ENCODE measurements at regions of chr11 and their contacts with region 1.

Region 1: GRCh38 chr11:126317756-126318573 is 14.1 kb downstream of the DCPS start:
- DNase-seq: peak; percentile 96
- H3K4me3 ChIP-seq: peak overlapping the region; percentile 27 to 44 (median 38)
- H3K27ac ChIP-seq: peak overlapping the region; percentile 82 to 85 (median 84)
- H3K4me1 ChIP-seq: peaks cover 25 to 28% (median 27%) of the 10 kb centered on the region in 4 donors
- H3K27me3 ChIP-seq: no peaks in the 10 kb centered on the region
- CTCF ChIP-seq: no peak
- EP300 ChIP-seq: no peak
- POLR2A ChIP-seq: no peak

Region 2: GRCh38 chr11:126303623-126304456 is 14.1 kb before region 1 on chr11 and contains the start of gene DCPS:
- intact Hi-C with region 1: loop called (anchors 1 kb)
- DNase-seq: peak; percentile 96
- H3K4me3 ChIP-seq: peak within 1 kb of the TSS; percentile 65 to 90 (median 68)
- H3K27ac ChIP-seq: peak within 1 kb of the TSS; percentile 85 to 92 (median 88)
- H3K4me1 ChIP-seq: peaks cover 17 to 24% (median 21%) of the 10 kb centered on the region in 4 donors
- H3K27me3 ChIP-seq: no peaks in the 10 kb centered on the region
- CTCF ChIP-seq: no peak
- EP300 ChIP-seq: no peak
- POLR2A ChIP-seq: peak; percentile 10
- total RNA-seq, gene DCPS: 8.0 to 18.4 (median 14.3) TPM

Region 3: DNA sequence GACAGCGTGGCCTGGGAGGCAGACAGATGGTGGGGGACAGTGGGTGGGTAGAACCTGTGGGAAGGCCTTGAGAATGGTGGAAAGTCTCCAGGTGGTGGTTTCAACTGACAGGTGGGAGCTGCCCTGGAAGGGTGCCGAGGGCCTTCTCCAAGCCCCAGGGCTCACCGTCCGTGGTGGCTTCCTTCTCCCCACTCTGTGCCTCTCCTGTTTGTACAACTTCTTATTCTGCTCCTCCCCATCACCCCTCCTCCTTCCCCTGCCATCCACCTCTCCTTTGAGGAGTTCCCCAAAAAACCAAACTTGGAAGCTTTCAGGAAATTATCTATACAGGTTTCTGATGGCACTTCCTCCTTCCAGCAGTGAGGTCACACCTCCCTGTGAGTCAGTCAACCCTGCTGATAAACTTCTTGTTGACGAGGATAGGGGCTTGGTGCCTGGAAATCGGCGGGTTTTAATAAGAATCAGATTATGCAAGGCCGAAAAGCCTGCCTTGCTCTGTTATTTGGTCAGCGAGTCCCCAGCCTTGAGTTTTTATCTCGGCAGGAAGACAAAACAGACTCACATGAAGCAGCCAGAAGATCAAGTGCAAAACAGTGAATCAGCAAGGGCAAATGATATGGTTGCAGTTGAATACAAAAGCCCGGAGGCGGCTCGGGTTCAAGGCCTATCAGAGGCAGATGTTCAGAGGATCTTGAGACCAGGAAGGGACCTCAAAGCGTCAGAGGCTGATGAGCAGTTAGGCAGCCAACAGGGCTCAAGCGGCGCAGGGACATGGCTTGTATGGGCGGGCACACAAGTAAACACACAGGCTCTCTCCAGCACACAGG is 28.0 kb after region 1 on chr11:
- intact Hi-C with region 1: no loop called
- DNase-seq: no peak
- H3K4me3 ChIP-seq: no peak overlapping the region
- H3K27ac ChIP-seq: peak overlapping the region; percentile 42 to 67 (median 60)
- H3K4me1 ChIP-seq: peaks cover 44 to 58% (median 51%) of the 10 kb centered on the region in 4 donors
- H3K27me3 ChIP-seq: no peaks in the 10 kb centered on the region
- CTCF ChIP-seq: no peak
- EP300 ChIP-seq: no peak
- POLR2A ChIP-seq: no peak

Region 4: DNA sequence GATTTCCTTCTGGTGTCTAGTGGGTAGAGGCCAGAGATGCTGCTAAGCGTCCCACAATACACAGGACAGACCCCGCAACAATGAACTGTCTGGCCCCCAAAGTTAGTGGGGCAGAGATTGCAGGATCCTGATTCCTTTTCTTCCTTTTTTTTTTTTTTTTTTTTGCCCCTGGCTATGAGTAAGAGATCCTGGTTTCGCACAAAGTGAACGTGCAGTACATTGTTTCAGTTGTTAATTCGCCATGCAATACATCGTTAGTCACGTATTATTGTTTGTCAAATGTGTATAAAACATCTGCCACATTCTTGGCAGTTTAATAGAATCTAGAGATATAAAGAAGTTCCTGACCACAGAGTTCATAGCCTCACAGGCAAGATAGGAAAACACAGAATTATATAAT is 57.8 kb after region 1 on chr11:
- intact Hi-C with region 1: no loop called
- DNase-seq: no peak
- H3K4me3 ChIP-seq: no peak overlapping the region
- H3K27ac ChIP-seq: no peak overlapping the region
- H3K4me1 ChIP-seq: peaks cover 14 to 21% (median 16%) of the 10 kb centered on the region in 4 donors
- H3K27me3 ChIP-seq: no peaks in the 10 kb centered on the region
- CTCF ChIP-seq: no peak
- EP300 ChIP-seq: no peak
- POLR2A ChIP-seq: no peak

Measured in esophagus muscularis mucosa (tissue), 4 donors.